Activated CD4-positive, alpha-beta T cell treated with anti-CD3 and anti-CD28 coated beads for 36 hours (primary cell): ENCODE measurements at regions of chr14 and their contacts with region 1.

Region 1: GRCh38 chr14:61797309-61797708 is 35.1 kb downstream of the SNAPC1 start:
- DNase-seq: no peak
- ATAC-seq: no peak
- H3K4me3 Mint-ChIP-seq: no peak overlapping the region
- H3K27ac Mint-ChIP-seq: no peak overlapping the region
- H3K4me1 Mint-ChIP-seq: peaks cover 2% of the 10 kb centered on the region
- H3K27me3 Mint-ChIP-seq: no peaks in the 10 kb centered on the region

Region 2: DNA sequence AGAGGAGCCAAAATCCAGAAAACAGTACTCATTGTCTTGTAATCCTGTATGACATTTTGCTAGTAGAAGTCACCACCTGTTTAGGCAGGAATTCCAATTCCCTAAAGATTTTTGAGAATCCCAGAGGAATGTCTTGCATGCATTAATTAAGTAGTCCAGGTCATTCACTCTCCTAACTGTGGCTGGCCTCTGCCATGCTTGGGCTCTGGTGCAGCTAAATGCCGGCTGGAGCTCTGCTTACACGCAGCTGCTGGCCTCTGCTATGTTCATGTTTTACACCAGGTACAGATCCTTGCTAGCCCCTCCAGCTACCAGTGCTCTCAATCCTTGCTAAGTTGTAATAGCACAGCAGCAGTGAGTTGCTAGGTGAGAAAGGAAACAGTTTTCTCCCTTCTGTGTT is 118.3 kb before region 1 on chr14:
- CTCF ChIA-PET with region 1: no interaction called
- POLR2A ChIA-PET with region 1: no interaction called
- intact Hi-C with region 1: no loop called
- DNase-seq: no peak
- ATAC-seq: no peak
- H3K4me3 Mint-ChIP-seq: no peak overlapping the region
- H3K27ac Mint-ChIP-seq: no peak overlapping the region
- H3K4me1 Mint-ChIP-seq: peaks cover 7% of the 10 kb centered on the region
- H3K27me3 Mint-ChIP-seq: no peaks in the 10 kb centered on the region

Region 3: GRCh38 chr14:61761959-61762786 is 35.1 kb before region 1 on chr14 and contains the start of gene SNAPC1:
- CTCF ChIA-PET with region 1: no interaction called
- POLR2A ChIA-PET with region 1: no interaction called
- intact Hi-C with region 1: no loop called
- DNase-seq: peak; percentile 98
- ATAC-seq: peak; percentile 98
- H3K4me3 Mint-ChIP-seq: peak within 1 kb of the TSS; percentile 95
- H3K27ac Mint-ChIP-seq: peak within 1 kb of the TSS; percentile 96
- H3K4me1 Mint-ChIP-seq: peaks cover 35% of the 10 kb centered on the region
- H3K27me3 Mint-ChIP-seq: no peaks in the 10 kb centered on the region
- total RNA-seq, gene SNAPC1: 10.5 to 11.2 TPM

Region 4: DNA sequence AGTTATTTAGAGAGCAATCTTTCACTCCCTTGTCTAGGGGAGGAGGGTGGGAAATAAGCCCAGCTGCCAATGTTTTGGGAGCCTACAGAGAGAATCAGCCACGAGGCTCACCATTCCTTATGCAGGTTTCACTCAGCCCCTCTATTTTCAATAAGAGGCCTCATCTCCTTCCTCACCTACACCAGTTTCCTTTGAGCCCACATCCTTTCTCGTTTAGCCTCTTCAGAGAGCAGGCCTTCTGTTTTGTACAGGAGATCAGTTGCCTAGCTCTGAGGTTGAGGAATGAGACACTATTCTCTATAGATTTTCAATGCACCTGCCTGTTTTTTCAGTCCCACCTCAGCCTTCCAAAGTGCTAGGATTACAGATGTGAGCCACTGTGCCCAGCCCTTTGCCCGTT is 17.2 kb before region 1 on chr14:
- CTCF ChIA-PET with region 1: interaction called, 4 read pairs
- POLR2A ChIA-PET with region 1: no interaction called
- intact Hi-C with region 1: loop called in 1 of 2 experiments (anchors 2 kb)
- DNase-seq: peak; percentile 20
- ATAC-seq: peak; percentile 95
- H3K4me3 Mint-ChIP-seq: no peak overlapping the region
- H3K27ac Mint-ChIP-seq: peak overlapping the region; percentile 88
- H3K4me1 Mint-ChIP-seq: peaks cover 36% of the 10 kb centered on the region
- H3K27me3 Mint-ChIP-seq: no peaks in the 10 kb centered on the region